ENCODE measurements at regions of chr17 and their contacts with region 1.

Region 1: GRCh38 chr17:49515196-49515770 is 20.2 kb downstream of the NGFR start:
- DNase-seq: peak; percentile 65 to 81
- H3K4me3 ChIP-seq: no peak overlapping the region
- H3K27ac ChIP-seq: no peak overlapping the region
- H3K4me1 ChIP-seq: peaks cover 8% of the 10 kb centered on the region; the same call in 1 of the 2 replicates
- H3K27me3 ChIP-seq: no peaks in the 10 kb centered on the region
- CTCF ChIP-seq: no peak

Region 2: GRCh38 chr17:49530118-49530517 is 14.8 kb after region 1 on chr17:
- CTCF ChIA-PET with region 1: interaction called, 18 read pairs
- POLR2A ChIA-PET with region 1: no interaction called
- intact Hi-C with region 1: no loop called
- DNase-seq: no peak
- H3K4me3 ChIP-seq: no peak overlapping the region
- H3K27ac ChIP-seq: no peak overlapping the region
- H3K4me1 ChIP-seq: no peaks in the 10 kb centered on the region
- H3K27me3 ChIP-seq: peaks cover 53% of the 10 kb centered on the region
- CTCF ChIP-seq: no peak

Measured in PC-9 (cell line).